HEK293T (cell line): ENCODE measurements at regions of chr16 and their contacts with region 1.

Region 1: GRCh38 chr16:2251483-2252240 is at the start of gene ECI1:
- DNase-seq: peak; percentile 96

Region 2: GRCh38 chr16:2194852-2195321 is 56.8 kb before region 1 on chr16:
- CTCF ChIA-PET with region 1: interaction called, 8 read pairs
- POLR2A ChIA-PET with region 1: interaction called, 27 read pairs
- DNase-seq: peak; percentile 55

Region 3: GRCh38 chr16:2213817-2214720 is 37.6 kb before region 1 on chr16:
- CTCF ChIA-PET with region 1: no interaction called
- POLR2A ChIA-PET with region 1: interaction called, 24 read pairs
- DNase-seq: no peak

Region 4: DNA sequence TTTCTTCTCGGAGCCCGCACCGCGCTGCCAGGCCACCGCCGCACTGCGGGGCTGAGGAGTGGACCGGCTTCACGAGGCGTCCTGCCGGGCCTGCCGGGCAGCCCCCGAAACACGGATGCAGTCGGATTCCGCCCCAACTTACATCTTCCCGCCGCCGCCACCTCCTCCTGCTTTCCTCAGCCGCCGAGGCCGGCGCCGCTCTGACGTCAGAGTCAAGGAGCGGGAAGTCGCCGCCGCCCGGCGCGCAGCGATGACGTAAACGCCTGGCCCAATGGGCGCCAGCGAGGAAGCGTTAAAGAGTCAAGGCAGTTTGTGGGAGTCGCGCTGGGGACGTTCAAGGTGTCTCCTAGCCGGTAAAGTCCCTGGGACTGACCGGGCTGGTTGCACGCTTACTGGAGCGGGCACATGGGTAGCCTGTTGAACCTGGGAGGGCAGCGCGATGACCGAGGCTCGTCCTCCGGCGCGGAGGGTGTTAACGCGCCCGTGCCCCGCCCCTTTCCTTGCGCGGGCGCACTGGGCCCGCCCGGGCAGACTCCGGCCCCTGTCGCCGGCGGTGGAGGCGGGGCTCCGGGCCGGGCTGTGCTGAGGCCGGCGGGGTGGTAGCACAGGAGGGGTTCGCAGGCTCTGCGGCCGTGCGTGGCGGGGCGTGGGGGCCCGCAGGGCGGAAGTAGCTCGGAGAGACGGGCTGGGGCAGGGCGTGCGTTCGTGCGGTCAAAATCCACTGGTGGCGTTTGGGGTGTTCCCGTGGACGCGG is 16.4 kb after region 1 on chr16 and contains the start of gene RNPS1:
- CTCF ChIA-PET with region 1: interaction called, 5 read pairs
- POLR2A ChIA-PET with region 1: interaction called, 18 read pairs
- DNase-seq: peak; percentile 97

Region 5: GRCh38 chr16:2404099-2404498 is 152.4 kb after region 1 on chr16:
- CTCF ChIA-PET with region 1: no interaction called
- POLR2A ChIA-PET with region 1: no interaction called
- DNase-seq: no peak